ENCODE measurements at regions of chr11 and their contacts with region 1.

Region 1: DNA sequence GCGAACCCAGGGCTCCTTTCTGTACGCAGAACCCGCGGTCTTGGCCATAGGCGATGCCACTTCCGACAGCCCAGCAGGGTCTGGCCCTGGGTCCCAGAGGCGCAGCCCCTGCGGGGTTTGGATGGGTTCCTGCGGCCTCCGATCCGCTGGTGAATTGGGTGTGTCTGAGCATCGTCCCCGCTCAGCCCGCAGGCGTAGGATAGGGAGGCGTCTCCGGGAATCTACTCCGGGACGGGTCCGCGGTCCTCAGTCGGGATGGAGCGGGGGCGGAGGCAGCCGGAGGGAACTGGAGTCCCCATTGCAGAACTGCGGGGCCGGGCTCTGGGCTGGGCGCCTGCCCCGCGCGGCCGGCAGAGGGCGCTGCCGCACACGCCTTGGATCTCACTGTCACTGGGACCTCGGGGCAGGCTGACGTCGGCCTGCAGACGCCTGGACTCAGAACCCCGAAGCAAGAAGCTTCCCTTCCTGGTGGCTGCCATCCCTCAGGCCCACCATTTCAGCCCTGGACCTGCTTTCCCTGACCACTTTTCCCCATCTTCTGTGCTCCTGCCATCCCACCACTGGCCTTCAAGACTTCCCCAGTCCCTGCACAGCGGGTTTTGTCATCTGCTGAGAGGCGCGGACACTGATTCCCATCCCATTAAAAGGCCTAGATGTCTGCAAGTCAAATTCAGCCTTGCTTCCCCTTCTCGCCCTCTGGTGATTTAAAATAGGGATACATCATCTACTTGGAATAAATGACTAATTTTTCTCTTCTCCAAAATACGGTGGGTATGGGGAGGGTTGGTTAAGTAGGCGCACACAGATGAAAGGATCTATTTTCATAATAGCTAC is 38.3 kb upstream of the CREB3L1 start:
- DNase-seq: peak; percentile 40
- ATAC-seq: peak; percentile 90
- H3K4me3 ChIP-seq: peak overlapping the region; percentile 23 to 65 (median 30); a peak in 3 of 6 replicates
- H3K27ac ChIP-seq: no peak overlapping the region
- H3K4me1 ChIP-seq: peaks cover 37% of the 10 kb centered on the region
- H3K27me3 ChIP-seq: peaks cover 7 to 38% of the 10 kb centered on the region in 2 experiments
- CTCF ChIP-seq: peak; percentile 97
- EP300 ChIP-seq: no peak
- POLR2A ChIP-seq: no peak
- RAD21 ChIP-seq: peak; percentile 91

Region 2: DNA sequence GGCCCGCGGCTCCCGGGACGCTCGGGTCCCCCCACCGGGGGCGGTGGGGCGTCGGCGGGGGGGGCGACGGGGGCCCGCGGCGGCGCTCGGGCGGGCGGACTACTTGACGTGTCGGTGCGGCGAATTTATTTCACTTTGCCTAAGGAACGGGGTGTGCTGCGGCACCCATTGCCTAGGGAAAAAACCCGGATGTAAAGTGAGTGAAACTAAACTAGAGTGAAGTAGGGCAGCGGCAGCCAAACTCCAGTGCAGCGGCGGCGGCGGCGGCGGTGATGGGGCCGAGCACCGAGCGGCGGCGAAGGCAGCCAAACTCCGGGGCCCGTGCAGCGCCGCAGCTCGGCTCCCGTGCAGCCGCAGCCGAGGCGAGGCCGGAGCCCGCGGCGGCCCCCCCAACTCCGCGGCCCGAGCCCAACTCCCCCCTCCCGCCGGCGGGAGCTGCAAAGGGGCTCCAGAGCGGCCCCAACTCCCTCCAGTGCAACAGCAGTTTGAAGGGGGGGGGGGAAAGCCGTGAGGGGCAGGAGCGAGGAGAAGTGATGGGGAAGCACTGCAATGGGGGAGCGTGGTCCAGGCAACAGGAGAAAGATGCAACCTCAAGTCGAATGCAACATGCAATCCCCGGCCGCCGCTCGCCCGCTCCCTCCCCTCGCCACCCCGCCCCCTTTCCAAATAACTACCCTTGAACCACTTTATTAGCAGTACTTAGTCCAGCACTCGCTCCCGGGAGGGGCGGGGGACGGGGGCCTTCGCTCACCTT is 117.3 kb before region 1 on chr11:
- CTCF ChIA-PET with region 1: no interaction called
- POLR2A ChIA-PET with region 1: interaction called, 4 read pairs
- in situ Hi-C with region 1: no loop called
- intact Hi-C with region 1: loop called (anchors 10 kb)
- DNase-seq: peak; percentile 82
- ATAC-seq: peak; percentile 57
- H3K4me3 ChIP-seq: peak overlapping the region; percentile 73 to 99 (median 78)
- H3K27ac ChIP-seq: peak overlapping the region; percentile 77
- H3K4me1 ChIP-seq: peaks cover 33% of the 10 kb centered on the region
- H3K27me3 ChIP-seq: peaks cover 0 to 2% of the 10 kb centered on the region in 2 experiments; a peak in 1 of 5 replicates
- CTCF ChIP-seq: no peak
- EP300 ChIP-seq: no peak
- POLR2A ChIP-seq: peak; percentile 11 to 63; a peak in 2 of 4 replicates
- RAD21 ChIP-seq: no peak

Region 3: GRCh38 chr11:46272816-46273427 is 33.7 kb after region 1 on chr11:
- CTCF ChIA-PET with region 1: no interaction called
- POLR2A ChIA-PET with region 1: interaction called, 13 read pairs
- in situ Hi-C with region 1: no loop called
- intact Hi-C with region 1: no loop called
- DNase-seq: no peak
- ATAC-seq: peak; percentile 28; the same call in 2 of the 3 replicates
- H3K4me3 ChIP-seq: no peak overlapping the region
- H3K27ac ChIP-seq: no peak overlapping the region
- H3K4me1 ChIP-seq: peaks cover 50% of the 10 kb centered on the region
- H3K27me3 ChIP-seq: peaks cover 6 to 74% of the 10 kb centered on the region in 2 experiments; a peak in 4 of 5 replicates
- CTCF ChIP-seq: no peak
- EP300 ChIP-seq: no peak
- POLR2A ChIP-seq: no peak
- RAD21 ChIP-seq: no peak

Region 4: DNA sequence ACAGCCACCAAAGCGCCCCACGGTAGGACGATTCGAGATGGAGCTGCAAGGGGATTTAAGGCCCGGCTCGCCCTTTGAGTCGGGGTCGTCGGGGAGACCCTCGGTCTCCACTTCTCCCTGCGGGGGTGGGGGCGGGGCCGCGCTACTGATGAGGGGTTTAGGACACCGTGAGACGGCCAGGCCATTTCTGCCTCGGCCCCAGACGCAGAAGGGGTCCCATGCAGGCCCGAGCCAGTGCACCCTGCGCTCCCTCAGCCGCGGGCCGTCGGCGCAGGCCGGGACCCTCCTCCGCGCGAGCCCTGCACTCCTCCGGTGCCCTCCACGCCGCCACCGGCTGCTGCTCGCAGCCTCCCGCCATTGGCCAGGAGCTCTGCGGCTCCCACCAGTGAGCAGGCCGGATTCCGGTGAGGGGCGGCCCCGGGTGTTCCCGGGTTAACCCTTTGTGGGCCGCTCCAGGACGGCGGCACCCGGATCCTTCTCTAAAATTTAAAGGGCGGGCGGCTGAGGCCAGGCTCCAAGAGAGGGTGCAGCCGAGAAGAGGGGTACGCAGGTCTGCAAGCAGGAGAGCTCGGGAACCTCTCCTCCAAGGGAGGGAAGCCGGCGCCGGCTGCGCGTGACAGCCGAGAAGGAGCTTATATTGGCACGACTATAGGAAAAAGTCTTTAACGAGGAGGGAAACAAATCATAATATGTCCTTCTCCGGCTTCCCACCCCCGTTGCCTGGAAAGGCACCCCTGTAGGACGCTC is 56.3 kb after region 1 on chr11:
- CTCF ChIA-PET with region 1: interaction called, 4 read pairs
- POLR2A ChIA-PET with region 1: interaction called, 13 read pairs
- in situ Hi-C with region 1: no loop called
- intact Hi-C with region 1: no loop called
- DNase-seq: peak; percentile 27
- ATAC-seq: peak; percentile 91
- H3K4me3 ChIP-seq: peak overlapping the region; percentile 22 to 50 (median 24); a peak in 3 of 6 replicates
- H3K27ac ChIP-seq: no peak overlapping the region
- H3K4me1 ChIP-seq: peaks cover 27% of the 10 kb centered on the region
- H3K27me3 ChIP-seq: peaks cover 20 to 71% of the 10 kb centered on the region in 2 experiments; a peak in 4 of 5 replicates
- CTCF ChIP-seq: no peak
- EP300 ChIP-seq: no peak
- POLR2A ChIP-seq: no peak
- RAD21 ChIP-seq: no peak

Region 5: GRCh38 chr11:46308631-46309419 is 69.6 kb after region 1 on chr11:
- CTCF ChIA-PET with region 1: interaction called, 25 read pairs
- POLR2A ChIA-PET with region 1: interaction called, 33 read pairs
- in situ Hi-C with region 1: no loop called
- intact Hi-C with region 1: loop called (anchors 1 kb)
- DNase-seq: peak; percentile 39
- ATAC-seq: peak; percentile 85
- H3K4me3 ChIP-seq: no peak overlapping the region
- H3K27ac ChIP-seq: no peak overlapping the region
- H3K4me1 ChIP-seq: peaks cover 34% of the 10 kb centered on the region
- H3K27me3 ChIP-seq: peaks cover 3 to 9% of the 10 kb centered on the region in 2 experiments; a peak in 3 of 5 replicates
- CTCF ChIP-seq: peak; percentile 94
- EP300 ChIP-seq: no peak
- POLR2A ChIP-seq: no peak
- RAD21 ChIP-seq: peak; percentile 72

Region 6: DNA sequence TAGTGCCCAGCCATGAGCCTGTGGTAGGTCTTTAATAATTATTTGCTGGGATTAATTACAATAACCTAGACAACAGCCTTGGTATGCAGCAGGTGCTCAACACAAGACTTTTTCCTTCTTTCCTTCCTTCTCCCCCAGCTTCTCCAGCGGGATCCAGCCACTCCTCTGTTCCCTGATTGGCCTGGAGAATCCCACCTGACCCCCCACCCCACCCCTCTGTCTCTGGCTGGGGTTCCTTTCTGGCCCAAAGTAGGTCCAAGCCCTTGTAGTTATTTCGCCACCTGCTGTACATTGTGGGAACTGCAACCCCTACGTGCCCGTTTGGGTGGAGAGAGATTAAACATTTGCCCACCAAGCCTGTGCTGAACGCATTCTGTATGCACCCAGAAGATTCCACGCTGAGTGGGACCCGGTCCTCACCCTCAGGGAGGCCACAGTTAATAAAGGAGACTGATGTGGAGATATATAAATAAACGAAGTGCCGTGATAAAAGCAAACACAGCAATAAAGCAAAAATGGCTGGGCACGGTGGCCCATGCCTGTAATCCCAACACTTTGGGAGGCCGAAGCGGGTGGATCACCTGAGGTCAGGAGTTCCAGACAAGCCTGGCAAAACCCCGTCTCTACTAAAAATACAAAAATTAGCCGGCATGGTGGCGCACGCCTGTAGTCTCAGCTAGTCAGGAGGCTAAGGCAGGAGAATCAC is 76.0 kb after region 1 on chr11:
- CTCF ChIA-PET with region 1: interaction called, 25 read pairs
- POLR2A ChIA-PET with region 1: interaction called, 33 read pairs
- in situ Hi-C with region 1: no loop called
- intact Hi-C with region 1: no loop called
- DNase-seq: peak; percentile 57
- ATAC-seq: peak; percentile 71
- H3K4me3 ChIP-seq: no peak overlapping the region
- H3K27ac ChIP-seq: no peak overlapping the region
- H3K4me1 ChIP-seq: peaks cover 10% of the 10 kb centered on the region; the same call in 1 of the 2 replicates
- H3K27me3 ChIP-seq: peaks cover 1 to 22% of the 10 kb centered on the region in 2 experiments; a peak in 3 of 5 replicates
- CTCF ChIP-seq: peak; percentile 83
- EP300 ChIP-seq: no peak
- POLR2A ChIP-seq: no peak
- RAD21 ChIP-seq: 0 out of 2 replicates have a peak, but pooled peaks have one; percentile 13